ENCODE measurements at regions of chr5 and their contacts with region 1.

Region 1: DNA sequence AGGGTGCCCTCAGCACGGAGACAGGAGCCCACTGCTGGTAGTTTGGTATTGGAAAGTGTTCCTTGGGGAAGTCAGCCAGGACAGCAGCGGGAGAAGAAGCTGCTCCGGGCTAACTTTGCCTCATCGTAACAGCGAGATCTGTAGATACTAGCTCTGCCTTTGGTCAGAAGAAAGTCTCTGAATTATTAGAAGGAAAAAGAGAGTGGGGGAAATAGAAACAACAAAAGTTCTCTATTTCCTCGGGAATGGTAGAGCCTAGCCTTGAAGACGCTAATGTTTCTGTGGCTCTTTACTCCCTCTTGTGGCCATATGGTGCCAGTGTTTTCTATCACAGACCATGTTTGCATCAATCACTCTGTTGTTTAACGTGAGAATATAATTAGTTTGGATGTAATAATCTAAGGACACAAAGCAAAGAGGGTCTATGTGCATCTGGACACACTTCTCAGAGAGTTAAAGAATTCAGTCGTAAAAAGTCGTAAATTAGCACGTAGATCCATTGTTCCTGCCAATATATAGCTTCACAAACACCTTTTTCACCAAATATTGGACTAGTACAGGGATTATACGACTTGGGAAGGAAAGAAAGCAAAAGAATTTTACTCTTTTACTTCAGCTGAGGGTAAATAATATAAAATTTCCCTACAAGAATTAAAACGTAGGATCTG is 40.2 kb upstream of the HSD17B4 start:
- DNase-seq: peak; percentile 69 to 84 (median 72)
- ATAC-seq: peak; percentile 96
- H3K4me3 ChIP-seq: peak overlapping the region; percentile 6
- H3K27ac ChIP-seq: peak overlapping the region; percentile 27; the same call in 1 of the 3 replicates
- H3K4me1 ChIP-seq: peaks cover 0 to 10% of the 10 kb centered on the region in 2 experiments; a peak in 3 of 5 replicates
- H3K27me3 ChIP-seq: no peaks in the 10 kb centered on the region
- CTCF ChIP-seq: peak; percentile 78 to 94 (median 87)
- EP300 ChIP-seq: no peak
- POLR2A ChIP-seq: no peak
- RAD21 ChIP-seq: peak; percentile 96 to 97

Region 2: GRCh38 chr5:119315516-119315949 is 96.5 kb before region 1 on chr5:
- CTCF ChIA-PET with region 1: no interaction called
- POLR2A ChIA-PET with region 1: no interaction called
- in situ Hi-C with region 1: no loop called
- intact Hi-C with region 1: loop called (anchors 1 kb)
- DNase-seq: peak; percentile 61 to 80 (median 70)
- ATAC-seq: peak; percentile 77
- H3K4me3 ChIP-seq: no peak overlapping the region
- H3K27ac ChIP-seq: peak overlapping the region; percentile 37; the same call in 1 of the 3 replicates
- H3K4me1 ChIP-seq: peaks cover 11 to 44% of the 10 kb centered on the region in 2 experiments
- H3K27me3 ChIP-seq: no peaks in the 10 kb centered on the region
- CTCF ChIP-seq: peak; percentile 49 to 67 (median 56); a peak in 5 of 6 replicates
- EP300 ChIP-seq: peak; percentile 32; the same call in 1 of the 2 replicates
- POLR2A ChIP-seq: no peak
- RAD21 ChIP-seq: peak; percentile 57 to 65

Region 3: DNA sequence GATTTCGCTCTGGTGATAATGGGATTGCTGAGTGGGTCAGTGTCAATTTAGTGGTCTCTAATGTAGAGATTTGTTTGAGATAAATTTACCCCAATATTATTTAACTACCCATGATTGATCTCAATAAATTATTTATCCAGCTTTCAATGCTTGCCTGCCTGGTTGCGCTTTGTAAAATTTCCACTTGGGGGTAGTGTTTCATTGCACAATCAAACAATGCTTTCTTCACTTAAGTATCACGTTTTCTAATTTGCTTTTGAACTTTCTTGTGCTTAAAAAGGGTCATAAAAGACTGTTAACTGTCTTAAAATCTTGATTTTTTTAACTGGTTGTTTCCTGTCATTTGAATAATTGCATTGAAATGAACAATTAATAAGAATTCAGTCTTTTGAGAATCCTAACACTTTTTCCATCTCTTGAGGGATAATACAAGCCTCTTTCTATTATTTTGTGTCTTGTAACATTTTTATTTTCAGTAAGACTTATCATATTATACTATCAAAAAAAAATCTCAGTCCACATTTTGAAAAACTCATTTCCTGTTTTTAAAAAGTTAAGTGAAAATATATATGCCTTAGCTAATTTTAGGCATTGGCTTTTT is 58.9 kb after region 1 on chr5:
- CTCF ChIA-PET with region 1: no interaction called
- POLR2A ChIA-PET with region 1: no interaction called
- in situ Hi-C with region 1: no loop called
- intact Hi-C with region 1: no loop called
- DNase-seq: peak in 3 of 4 experiments; percentile 11 to 42 (median 14)
- ATAC-seq: peak; percentile 62; the same call in 2 of the 3 replicates
- H3K4me3 ChIP-seq: no peak overlapping the region
- H3K27ac ChIP-seq: no peak overlapping the region
- H3K4me1 ChIP-seq: no peaks in the 10 kb centered on the region
- H3K27me3 ChIP-seq: no peaks in the 10 kb centered on the region
- CTCF ChIP-seq: peak; percentile 30 to 66 (median 54); a peak in 5 of 6 replicates
- EP300 ChIP-seq: no peak
- POLR2A ChIP-seq: no peak
- RAD21 ChIP-seq: peak; percentile 46 to 72